ENCODE measurements at regions of chr22 and their contacts with region 1.

Region 1: DNA sequence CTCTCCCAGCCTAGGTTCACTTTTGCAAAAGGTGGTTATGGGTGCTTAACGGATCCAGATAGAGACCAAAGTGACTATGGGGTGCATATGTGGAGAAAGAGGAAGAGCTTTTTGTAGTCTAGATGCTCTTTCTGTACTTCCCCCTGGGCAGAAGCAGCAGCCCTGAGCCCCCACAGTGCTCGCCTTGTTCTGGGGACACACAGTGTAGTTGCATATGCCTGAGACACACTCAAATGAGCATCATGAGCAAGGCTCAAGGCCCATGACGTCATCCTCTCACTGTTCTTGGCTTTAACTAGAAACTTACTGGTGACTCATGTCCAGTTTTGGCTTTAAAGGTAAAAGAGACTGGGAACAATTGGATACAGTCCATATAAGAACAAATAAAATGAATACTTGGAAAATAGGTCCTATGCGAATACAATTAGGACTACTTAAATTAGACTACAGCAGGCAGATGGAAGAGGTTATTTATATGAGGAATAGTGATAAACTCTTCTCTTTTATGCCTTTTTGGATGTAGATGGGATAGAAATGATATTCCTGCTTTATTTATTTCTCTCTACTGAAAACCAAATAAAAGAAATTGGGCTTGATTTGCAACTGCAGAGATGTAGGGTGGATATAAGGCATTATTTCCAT is 20.1 kb upstream of the PEX26 start:
- DNase-seq: peak; percentile 72
- H3K4me3 Mint-ChIP-seq: no peak overlapping the region
- H3K27ac Mint-ChIP-seq: peak overlapping the region; percentile 22
- H3K4me1 Mint-ChIP-seq: peaks cover 56% of the 10 kb centered on the region
- H3K27me3 Mint-ChIP-seq: no peaks in the 10 kb centered on the region
- CTCF ChIP-seq: no peak

Region 2: GRCh38 chr22:18001040-18001893 is 56.4 kb before region 1 on chr22:
- CTCF ChIA-PET with region 1: interaction called, 4 read pairs
- intact Hi-C with region 1: loop called (anchors 5 kb)
- DNase-seq: peak; percentile 91
- H3K4me3 Mint-ChIP-seq: peak overlapping the region; percentile 70
- H3K27ac Mint-ChIP-seq: peak overlapping the region; percentile 91
- H3K4me1 Mint-ChIP-seq: peaks cover 36% of the 10 kb centered on the region
- H3K27me3 Mint-ChIP-seq: no peaks in the 10 kb centered on the region
- CTCF ChIP-seq: peak; percentile 47

Region 3: DNA sequence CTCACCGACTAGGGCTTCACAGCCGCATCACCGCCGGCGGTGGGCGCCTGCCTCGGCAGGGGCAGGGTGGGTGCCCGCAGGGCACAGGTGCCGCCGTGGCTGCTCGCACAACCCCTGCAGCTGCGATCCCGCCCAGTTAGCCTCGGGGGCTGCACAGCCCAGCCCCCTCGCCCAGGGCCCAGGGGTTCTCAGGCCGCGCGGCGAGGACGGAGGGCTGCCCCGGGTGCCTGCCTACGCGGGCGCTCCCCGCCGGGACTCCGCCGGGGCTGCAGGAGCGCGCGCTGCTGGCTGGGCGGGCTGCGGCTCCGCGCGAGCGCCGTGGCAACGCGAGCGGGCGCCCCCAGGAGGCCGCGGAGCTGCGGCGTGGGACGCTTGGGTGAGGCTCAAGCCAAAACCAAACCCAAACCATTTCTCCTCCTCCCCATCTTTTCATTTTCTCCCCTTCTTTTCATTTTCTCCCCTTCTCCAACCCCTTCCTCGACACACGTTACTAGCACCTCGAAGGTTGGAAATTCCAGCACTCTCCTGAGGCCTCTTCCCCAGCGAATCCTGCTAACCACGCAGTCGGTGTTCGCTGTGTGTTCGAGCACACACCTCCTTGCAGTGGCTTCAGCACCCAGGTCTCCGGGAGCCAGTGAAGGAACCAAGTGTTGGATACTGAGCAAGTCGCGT is 33.3 kb before region 1 on chr22 and contains the start of gene MICAL3:
- CTCF ChIA-PET with region 1: interaction called, 6 read pairs
- intact Hi-C with region 1: loop called (anchors 5 kb)
- DNase-seq: peak; percentile 83
- H3K4me3 Mint-ChIP-seq: peak within 1 kb of the TSS; percentile 96
- H3K27ac Mint-ChIP-seq: peak within 1 kb of the TSS; percentile 46
- H3K4me1 Mint-ChIP-seq: peaks cover 33% of the 10 kb centered on the region
- H3K27me3 Mint-ChIP-seq: no peaks in the 10 kb centered on the region
- CTCF ChIP-seq: peak; percentile 55
- total RNA-seq, gene MICAL3: 60.6 and 71.3 TPM in 2 replicates

Region 4: DNA sequence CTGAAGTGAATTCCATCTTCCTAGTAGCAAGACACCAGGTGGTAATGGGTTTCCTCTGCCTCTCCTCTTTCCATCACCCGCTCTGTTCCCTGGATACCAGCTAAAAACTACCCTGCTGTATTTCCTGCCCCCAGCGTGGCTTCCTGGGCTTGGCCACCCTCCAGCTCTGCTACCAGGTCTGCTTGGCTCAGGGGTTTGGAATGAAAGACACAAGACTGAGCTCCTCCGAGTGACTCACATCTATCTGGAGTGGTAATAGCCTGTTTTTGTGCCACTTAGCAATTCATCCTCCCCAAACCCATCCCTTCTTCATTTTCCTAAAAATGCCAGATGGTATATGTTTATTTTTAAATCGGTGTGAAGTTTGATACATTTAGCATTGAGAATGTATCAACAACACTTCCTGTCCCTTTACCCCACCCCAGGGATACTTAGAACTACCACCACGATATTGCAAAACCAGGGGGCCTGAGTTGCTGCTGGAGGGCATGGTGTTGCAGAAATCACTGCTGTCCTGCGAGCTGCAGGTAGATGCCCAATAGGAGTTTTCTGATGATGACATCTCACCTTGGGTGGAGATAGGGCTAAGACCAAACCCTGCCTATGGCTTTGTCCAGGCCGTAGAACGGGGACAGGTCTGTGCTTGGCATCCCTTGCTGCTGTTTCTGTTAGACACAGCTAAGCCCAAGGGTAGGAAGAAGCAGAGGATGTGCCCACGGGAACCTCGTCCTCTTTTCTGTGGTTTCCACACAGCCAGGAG is 25.8 kb before region 1 on chr22:
- CTCF ChIA-PET with region 1: interaction called, 7 read pairs
- intact Hi-C with region 1: loop called (anchors 2 kb)
- DNase-seq: peak; percentile 87
- H3K4me3 Mint-ChIP-seq: no peak overlapping the region
- H3K27ac Mint-ChIP-seq: peak overlapping the region; percentile 41
- H3K4me1 Mint-ChIP-seq: peaks cover 51% of the 10 kb centered on the region
- H3K27me3 Mint-ChIP-seq: no peaks in the 10 kb centered on the region
- CTCF ChIP-seq: no peak